CD14-positive monocyte (primary cell): ENCODE measurements at regions of chr20 and their contacts with region 1.

Region 1: DNA sequence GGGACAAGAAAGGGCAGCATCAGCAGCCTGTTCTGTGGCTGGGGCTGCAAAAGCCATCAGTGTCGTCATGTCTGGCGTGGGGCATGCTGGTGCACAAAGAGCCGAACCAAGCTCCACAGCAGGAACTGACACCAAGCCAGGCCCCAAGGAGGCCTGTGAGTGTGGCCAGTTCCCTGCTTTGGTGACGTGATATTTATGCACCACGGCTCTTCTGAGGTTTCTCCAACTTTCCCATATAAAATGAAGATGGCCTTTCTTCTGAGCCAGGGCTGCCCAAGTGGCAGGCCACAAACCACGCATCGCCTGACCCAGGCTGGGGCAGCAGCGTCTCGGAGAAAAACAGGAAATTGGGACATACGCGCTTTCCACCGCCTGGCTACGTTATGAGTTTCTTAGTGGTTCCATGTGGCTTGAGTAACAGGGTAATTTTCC is 109.9 kb downstream of the RIN2 start:
- DNase-seq: peak; percentile 80 to 96 (median 91)
- H3K4me3 ChIP-seq: peak overlapping the region in 1 of 3 experiments; percentile 23
- H3K4me3 Mint-ChIP-seq: peak overlapping the region; percentile 29 to 62
- H3K27ac ChIP-seq: peak overlapping the region; percentile 83 to 90
- H3K27ac Mint-ChIP-seq: peak overlapping the region; percentile 89 to 99 (median 98)
- H3K4me1 ChIP-seq: peaks cover 29% of the 10 kb centered on the region in 2 donors
- H3K4me1 Mint-ChIP-seq: peaks cover 29% of the 10 kb centered on the region
- H3K27me3 ChIP-seq: no peaks in the 10 kb centered on the region
- H3K27me3 Mint-ChIP-seq: peaks cover 0 to 5% (median 0%) of the 10 kb centered on the region in 3 donors
- CTCF ChIP-seq: no peak

Region 2: DNA sequence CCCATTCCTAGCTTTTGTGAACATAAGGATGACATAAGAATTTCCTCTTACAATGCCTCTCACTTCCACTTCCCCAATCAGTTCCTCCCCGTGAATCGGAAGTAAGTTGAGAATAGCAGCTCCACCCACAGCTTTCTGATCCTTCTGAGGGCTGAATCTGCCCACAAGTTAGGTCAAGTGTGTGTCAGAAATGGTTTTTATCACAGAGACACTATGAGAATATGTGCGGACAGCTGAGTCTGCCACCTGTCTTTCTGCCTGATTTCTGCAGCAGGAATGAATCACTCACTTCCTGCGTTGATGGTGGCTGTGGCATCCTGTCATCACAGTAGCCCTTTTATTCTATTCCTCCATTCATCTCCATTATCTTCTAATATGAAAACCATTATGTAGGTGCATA is 39.7 kb before region 1 on chr20:
- intact Hi-C with region 1: loop called in 1 of 2 experiments (anchors 5 kb)
- DNase-seq: peak; percentile 80 to 95 (median 87)
- H3K4me3 ChIP-seq: peak overlapping the region in 1 of 3 experiments; percentile 25
- H3K4me3 Mint-ChIP-seq: peak overlapping the region; percentile 20 to 68
- H3K27ac ChIP-seq: peak overlapping the region in 1 of 2 donors; percentile 42
- H3K27ac Mint-ChIP-seq: peak overlapping the region; percentile 35 to 89 (median 79)
- H3K4me1 ChIP-seq: peaks cover 24% of the 10 kb centered on the region in 2 donors
- H3K4me1 Mint-ChIP-seq: peaks cover 40% of the 10 kb centered on the region
- H3K27me3 ChIP-seq: no peaks in the 10 kb centered on the region
- H3K27me3 Mint-ChIP-seq: peaks cover 0 to 4% (median 0%) of the 10 kb centered on the region in 3 donors
- CTCF ChIP-seq: peak; percentile 45